Esophagus muscularis mucosa (tissue), 4 donors: ENCODE measurements at regions of chr17 and their contacts with region 1.

Region 1: GRCh38 chr17:47895856-47896671 is at the start of gene SP2:
- DNase-seq: peak; percentile 100
- H3K4me3 ChIP-seq: peak within 1 kb of the TSS; percentile 71 to 97 (median 88)
- H3K27ac ChIP-seq: peak within 1 kb of the TSS; percentile 95 to 100 (median 98)
- H3K4me1 ChIP-seq: peaks cover 45 to 56% (median 54%) of the 10 kb centered on the region in 4 donors
- H3K27me3 ChIP-seq: no peaks in the 10 kb centered on the region
- CTCF ChIP-seq: peak in 2 of 3 experiments; percentile 5 to 48
- EP300 ChIP-seq: no peak
- POLR2A ChIP-seq: peak; percentile 93
- total RNA-seq, gene SP2: 7.1 to 16.0 (median 9.4) TPM

Region 2: GRCh38 chr17:47708863-47709541 is 187.1 kb before region 1 on chr17:
- intact Hi-C with region 1: loop called (anchors 10 kb)
- DNase-seq: no peak
- H3K4me3 ChIP-seq: peak overlapping the region; percentile 48 to 63 (median 51)
- H3K27ac ChIP-seq: peak overlapping the region; percentile 47 to 77 (median 62)
- H3K4me1 ChIP-seq: peaks cover 29 to 53% (median 37%) of the 10 kb centered on the region in 4 donors
- H3K27me3 ChIP-seq: peaks cover 0 to 11% (median 3%) of the 10 kb centered on the region in 4 donors
- CTCF ChIP-seq: no peak
- EP300 ChIP-seq: no peak
- POLR2A ChIP-seq: no peak

Region 3: GRCh38 chr17:47821424-47822391 is 74.4 kb before region 1 on chr17 and contains the start of gene OSBPL7:
- intact Hi-C with region 1: no loop called
- DNase-seq: no peak
- H3K4me3 ChIP-seq: peak within 1 kb of the TSS; percentile 58 to 65 (median 59)
- H3K27ac ChIP-seq: peak within 1 kb of the TSS; percentile 47 to 60 (median 56)
- H3K4me1 ChIP-seq: peaks cover 22 to 29% (median 23%) of the 10 kb centered on the region in 4 donors
- H3K27me3 ChIP-seq: no peaks in the 10 kb centered on the region
- CTCF ChIP-seq: peak in 1 of 3 experiments; percentile 27
- EP300 ChIP-seq: no peak
- POLR2A ChIP-seq: no peak
- total RNA-seq, gene OSBPL7: 2.0 to 8.4 (median 4.7) TPM

Region 4: DNA sequence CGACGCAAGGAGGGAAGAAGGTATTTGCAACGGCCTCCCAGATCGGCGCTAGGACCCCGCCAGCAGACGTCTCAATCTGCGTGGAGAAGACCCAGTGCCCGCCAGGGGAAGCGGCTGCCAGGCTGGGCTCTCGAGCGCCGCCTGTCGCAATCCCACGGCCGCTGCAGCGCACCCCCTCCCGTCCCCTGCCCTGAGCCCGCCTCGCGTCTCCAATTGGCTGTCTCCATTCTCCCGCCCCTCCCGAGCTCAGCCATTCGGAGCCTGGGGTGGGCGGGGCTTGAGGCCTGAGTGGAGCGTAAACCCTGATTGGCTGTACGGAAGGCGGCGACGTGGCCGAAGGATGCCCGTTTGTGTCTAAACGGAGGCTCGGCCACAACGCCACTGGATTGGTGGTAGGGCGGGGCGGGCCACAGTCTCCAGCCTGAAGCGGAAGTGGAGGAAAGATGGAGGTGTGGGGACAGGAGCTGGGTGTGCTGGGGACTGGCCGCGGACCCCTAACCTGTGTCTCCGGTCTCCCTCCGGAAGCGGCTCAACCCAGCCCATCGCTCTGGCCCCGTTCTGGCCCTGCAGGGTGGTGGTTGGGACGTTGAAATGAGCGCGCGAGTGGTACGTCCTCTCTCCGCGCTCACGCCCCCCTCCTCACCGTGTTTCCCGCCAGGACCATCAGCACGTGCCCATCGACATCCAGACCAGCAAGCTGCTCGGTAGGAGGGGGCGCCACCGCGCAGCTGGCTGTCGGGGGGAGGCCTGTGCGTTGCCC is 74.8 kb after region 1 on chr17 and contains the start of gene CDK5RAP3:
- intact Hi-C with region 1: loop called (anchors 2 kb)
- DNase-seq: peak; percentile 100
- H3K4me3 ChIP-seq: peak within 1 kb of the TSS; percentile 71 to 95 (median 87)
- H3K27ac ChIP-seq: peak within 1 kb of the TSS; percentile 80 to 89 (median 84)
- H3K4me1 ChIP-seq: peaks cover 7 to 28% (median 21%) of the 10 kb centered on the region in 4 donors
- H3K27me3 ChIP-seq: peaks cover 0 to 9% (median 0%) of the 10 kb centered on the region in 4 donors
- CTCF ChIP-seq: peak; percentile 92 to 100 (median 96)
- EP300 ChIP-seq: no peak
- POLR2A ChIP-seq: no peak
- total RNA-seq, gene CDK5RAP3: 43.9 to 70.2 (median 58.4) TPM